ENCODE measurements at regions of chr4 and their contacts with region 1.

Region 1: GRCh38 chr4:156968479-156968984 is 3.1 kb downstream of the PDGFC start:
- DNase-seq: peak; percentile 85
- ATAC-seq: peak; percentile 48
- H3K4me3 ChIP-seq: peak overlapping the region; percentile 61
- H3K27ac ChIP-seq: peak overlapping the region; percentile 64
- H3K4me1 ChIP-seq: peaks cover 7% of the 10 kb centered on the region
- H3K27me3 ChIP-seq: no peaks in the 10 kb centered on the region
- CTCF ChIP-seq: peak; percentile 88
- POLR2A ChIP-seq: no peak
- RAD21 ChIP-seq: peak; percentile 90

Region 2: GRCh38 chr4:156294577-156294976 is 674.0 kb before region 1 on chr4:
- CTCF ChIA-PET with region 1: no interaction called
- POLR2A ChIA-PET with region 1: no interaction called
- dilution Hi-C with region 1: no loop called
- in situ Hi-C with region 1: no loop called
- intact Hi-C with region 1: loop called (anchors 2 kb)
- DNase-seq: peak; percentile 87
- ATAC-seq: peak; percentile 70
- H3K4me3 ChIP-seq: no peak overlapping the region
- H3K27ac ChIP-seq: no peak overlapping the region
- H3K4me1 ChIP-seq: peaks cover 4% of the 10 kb centered on the region; the same call in 1 of the 2 replicates
- H3K27me3 ChIP-seq: no peaks in the 10 kb centered on the region
- CTCF ChIP-seq: peak; percentile 63
- POLR2A ChIP-seq: no peak
- RAD21 ChIP-seq: peak; percentile 63

Region 3: DNA sequence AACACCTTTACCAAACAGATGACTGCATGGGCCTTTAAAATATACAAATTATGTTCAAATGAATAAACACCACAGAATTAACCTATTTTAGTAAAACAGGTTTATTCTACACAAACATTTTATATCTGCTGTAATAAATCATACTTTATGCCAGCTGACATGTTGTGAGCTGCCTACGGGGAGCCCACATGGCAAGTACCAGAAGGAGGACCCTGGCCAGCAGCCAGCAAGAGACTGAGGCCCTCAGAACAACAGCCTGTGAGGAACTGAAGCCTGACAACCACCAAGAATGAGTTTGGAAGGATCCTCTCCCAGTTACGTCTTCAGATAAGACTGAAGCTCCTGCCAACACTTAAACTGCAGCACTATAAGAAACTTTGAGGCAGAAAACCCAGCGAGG is 373.9 kb before region 1 on chr4:
- CTCF ChIA-PET with region 1: no interaction called
- POLR2A ChIA-PET with region 1: no interaction called
- dilution Hi-C with region 1: no loop called
- in situ Hi-C with region 1: no loop called
- intact Hi-C with region 1: loop called (anchors 1 kb)
- DNase-seq: no peak
- ATAC-seq: no peak
- H3K4me3 ChIP-seq: no peak overlapping the region
- H3K27ac ChIP-seq: no peak overlapping the region
- H3K4me1 ChIP-seq: peaks cover 3% of the 10 kb centered on the region; the same call in 1 of the 2 replicates
- H3K27me3 ChIP-seq: no peaks in the 10 kb centered on the region
- CTCF ChIP-seq: no peak
- POLR2A ChIP-seq: no peak
- RAD21 ChIP-seq: no peak

Region 4: GRCh38 chr4:156686120-156686519 is 282.4 kb before region 1 on chr4:
- CTCF ChIA-PET with region 1: no interaction called
- POLR2A ChIA-PET with region 1: no interaction called
- dilution Hi-C with region 1: no loop called
- in situ Hi-C with region 1: no loop called
- intact Hi-C with region 1: loop called (anchors 5 kb)
- DNase-seq: peak; percentile 93
- ATAC-seq: peak; percentile 86
- H3K4me3 ChIP-seq: no peak overlapping the region
- H3K27ac ChIP-seq: no peak overlapping the region
- H3K4me1 ChIP-seq: no peaks in the 10 kb centered on the region; the same call in 1 of the 2 replicates
- H3K27me3 ChIP-seq: no peaks in the 10 kb centered on the region
- CTCF ChIP-seq: no peak
- POLR2A ChIP-seq: no peak
- RAD21 ChIP-seq: no peak

Region 5: DNA sequence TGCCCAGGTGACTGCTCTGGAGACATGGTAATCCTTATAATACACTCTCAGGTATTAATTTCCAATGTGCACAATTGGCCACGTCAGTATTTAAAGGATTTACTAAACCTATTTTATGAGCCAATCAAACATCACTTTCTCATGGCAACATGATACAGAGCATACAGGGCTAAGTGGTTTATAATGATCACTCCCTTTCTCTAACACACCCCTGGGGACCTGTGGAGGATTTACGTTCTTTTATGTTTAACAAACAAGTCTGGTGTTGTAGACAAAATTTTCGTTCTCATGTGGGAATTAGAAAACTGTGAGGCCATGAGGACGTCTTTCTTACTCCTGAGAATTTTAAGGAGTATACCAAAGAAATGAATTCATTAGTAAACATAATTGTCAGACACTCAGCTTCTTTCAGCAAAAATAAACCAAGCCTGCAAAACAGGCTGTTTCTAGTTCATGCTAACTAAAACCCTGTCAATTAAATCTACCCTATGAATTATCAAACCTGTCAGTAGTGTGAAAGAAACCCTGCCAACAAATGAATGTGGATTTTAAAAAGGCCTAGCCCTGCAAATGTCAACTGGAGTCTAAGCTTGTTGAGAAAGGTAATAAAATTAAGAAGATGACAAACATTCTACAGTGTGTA is 152.7 kb before region 1 on chr4:
- CTCF ChIA-PET with region 1: no interaction called
- POLR2A ChIA-PET with region 1: no interaction called
- dilution Hi-C with region 1: no loop called
- in situ Hi-C with region 1: no loop called
- intact Hi-C with region 1: no loop called
- DNase-seq: no peak
- ATAC-seq: no peak
- H3K4me3 ChIP-seq: no peak overlapping the region
- H3K27ac ChIP-seq: no peak overlapping the region
- H3K4me1 ChIP-seq: peaks cover 4% of the 10 kb centered on the region
- H3K27me3 ChIP-seq: no peaks in the 10 kb centered on the region
- CTCF ChIP-seq: no peak
- POLR2A ChIP-seq: no peak
- RAD21 ChIP-seq: no peak

Region 6: GRCh38 chr4:157045507-157046127 is 77.1 kb after region 1 on chr4:
- CTCF ChIA-PET with region 1: interaction called, 9 read pairs
- POLR2A ChIA-PET with region 1: interaction called, 4 read pairs
- dilution Hi-C with region 1: no loop called
- in situ Hi-C with region 1: loop called (anchors 5 kb)
- intact Hi-C with region 1: loop called (anchors 1 kb)
- DNase-seq: peak; percentile 80
- ATAC-seq: peak; percentile 96
- H3K4me3 ChIP-seq: no peak overlapping the region
- H3K27ac ChIP-seq: no peak overlapping the region
- H3K4me1 ChIP-seq: 0 out of 2 replicates have a peak, but pooled peaks cover 3% of the 10 kb centered on the region
- H3K27me3 ChIP-seq: no peaks in the 10 kb centered on the region
- CTCF ChIP-seq: peak; percentile 90
- POLR2A ChIP-seq: no peak
- RAD21 ChIP-seq: peak; percentile 94

Region 7: GRCh38 chr4:157220371-157220881 is 251.9 kb after region 1 on chr4 and contains the start of gene GRIA2:
- CTCF ChIA-PET with region 1: no interaction called
- POLR2A ChIA-PET with region 1: no interaction called
- dilution Hi-C with region 1: no loop called
- in situ Hi-C with region 1: no loop called
- intact Hi-C with region 1: loop called (anchors 5 kb)
- DNase-seq: peak; percentile 54
- ATAC-seq: peak; percentile 94
- H3K4me3 ChIP-seq: peak within 1 kb of the TSS; percentile 37
- H3K27ac ChIP-seq: no peak within 1 kb of the TSS
- H3K4me1 ChIP-seq: peaks cover 4% of the 10 kb centered on the region; the same call in 1 of the 2 replicates
- H3K27me3 ChIP-seq: peaks cover 33% of the 10 kb centered on the region
- CTCF ChIP-seq: no peak
- POLR2A ChIP-seq: no peak
- RAD21 ChIP-seq: no peak
- total RNA-seq, gene GRIA2: not detected in 2 replicates

Measured in IMR-90 (cell line).